ENCODE measurements at regions of chr4 and their contacts with region 1.

Region 1: DNA sequence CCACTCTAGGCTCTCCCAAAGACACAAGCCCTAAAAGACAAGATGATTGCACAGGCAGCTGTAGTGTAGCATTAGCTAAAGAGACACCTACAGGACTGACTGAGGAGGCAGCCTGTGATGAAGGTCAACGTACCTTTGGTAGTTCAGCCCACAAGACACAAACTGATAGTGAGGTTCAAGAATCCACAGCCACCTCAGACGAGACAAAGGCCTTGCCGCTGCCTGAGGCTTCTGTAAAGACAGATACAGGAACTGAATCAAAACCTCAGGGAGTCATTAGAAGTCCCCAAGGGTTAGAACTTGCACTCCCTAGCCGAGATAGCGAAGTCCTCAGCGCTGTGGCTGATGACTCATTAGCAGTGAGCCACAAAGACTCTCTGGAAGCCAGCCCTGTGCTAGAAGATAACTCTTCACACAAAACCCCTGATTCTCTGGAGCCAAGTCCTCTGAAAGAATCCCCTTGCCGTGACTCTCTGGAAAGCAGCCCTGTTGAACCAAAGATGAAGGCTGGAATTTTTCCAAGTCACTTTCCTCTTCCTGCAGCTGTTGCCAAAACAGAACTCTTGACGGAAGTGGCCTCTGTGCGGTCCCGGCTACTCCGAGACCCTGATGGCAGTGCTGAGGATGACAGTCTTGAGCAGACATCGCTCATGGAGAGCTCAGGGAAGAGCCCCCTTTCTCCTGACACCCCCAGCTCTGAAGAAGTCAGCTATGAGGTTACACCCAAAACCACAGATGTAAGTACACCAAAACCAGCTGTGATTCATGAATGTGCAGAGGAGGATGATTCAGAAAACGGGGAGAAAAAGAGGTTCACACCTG is 306.3 kb downstream of the ANK2 start:
- DNase-seq: peak; percentile 90
- H3K4me3 Mint-ChIP-seq: peak overlapping the region; percentile 54
- H3K27ac Mint-ChIP-seq: peak overlapping the region; percentile 89
- H3K4me1 Mint-ChIP-seq: peaks cover 20% of the 10 kb centered on the region
- H3K27me3 Mint-ChIP-seq: peaks cover 42% of the 10 kb centered on the region

Region 2: GRCh38 chr4:113278324-113278934 is 77.3 kb before region 1 on chr4:
- intact Hi-C with region 1: loop called (anchors 1 kb)
- DNase-seq: peak; percentile 85
- H3K4me3 Mint-ChIP-seq: no peak overlapping the region
- H3K27ac Mint-ChIP-seq: no peak overlapping the region
- H3K4me1 Mint-ChIP-seq: no peaks in the 10 kb centered on the region
- H3K27me3 Mint-ChIP-seq: peaks cover 22% of the 10 kb centered on the region

Region 3: GRCh38 chr4:113316879-113317278 is 38.9 kb before region 1 on chr4:
- intact Hi-C with region 1: loop called (anchors 5 kb)
- DNase-seq: peak; percentile 77
- H3K4me3 Mint-ChIP-seq: no peak overlapping the region
- H3K27ac Mint-ChIP-seq: no peak overlapping the region
- H3K4me1 Mint-ChIP-seq: peaks cover 10% of the 10 kb centered on the region
- H3K27me3 Mint-ChIP-seq: peaks cover 11% of the 10 kb centered on the region

Region 4: DNA sequence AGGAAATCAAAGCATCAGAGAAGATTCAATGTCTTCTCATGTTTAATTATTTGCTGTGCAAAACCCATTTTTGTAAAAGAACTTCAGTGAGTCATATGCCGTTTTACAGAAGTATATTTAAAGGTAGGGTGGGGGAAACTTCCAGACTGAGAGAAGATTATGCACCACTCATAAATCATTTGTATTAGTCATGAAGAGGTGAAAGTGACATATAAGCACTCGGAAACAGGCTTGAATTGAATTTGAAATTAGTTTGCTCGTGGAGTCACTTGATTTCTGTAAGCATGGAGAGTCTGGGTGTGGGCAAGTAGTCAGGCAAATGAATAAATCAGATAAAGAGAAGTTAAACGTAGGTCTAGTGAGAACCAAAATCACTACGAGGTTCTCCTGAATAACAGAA is 28.8 kb after region 1 on chr4:
- intact Hi-C with region 1: loop called (anchors 1 kb)
- DNase-seq: no peak
- H3K4me3 Mint-ChIP-seq: no peak overlapping the region
- H3K27ac Mint-ChIP-seq: no peak overlapping the region
- H3K4me1 Mint-ChIP-seq: peaks cover 9% of the 10 kb centered on the region
- H3K27me3 Mint-ChIP-seq: peaks cover 13% of the 10 kb centered on the region

Region 5: DNA sequence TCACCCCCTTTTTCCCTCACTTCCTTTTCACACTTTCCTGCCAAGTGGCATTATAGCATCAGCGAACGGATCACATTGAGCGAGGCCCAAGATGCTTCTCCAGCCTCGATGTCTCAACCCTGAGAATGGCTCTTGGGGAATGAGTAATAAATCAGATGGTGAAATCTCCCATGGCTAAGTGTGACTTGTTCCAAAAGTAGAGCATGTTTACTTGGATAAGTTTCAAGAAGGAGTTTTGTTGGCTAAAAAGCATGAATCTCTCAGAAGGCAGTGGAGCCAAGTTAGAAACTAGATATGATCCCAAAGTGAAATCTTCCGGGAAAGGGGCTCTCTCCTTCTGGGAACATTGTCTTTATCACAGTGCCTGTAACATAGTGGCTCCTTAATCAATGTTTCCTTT is 89.5 kb after region 1 on chr4:
- intact Hi-C with region 1: loop called (anchors 5 kb)
- DNase-seq: no peak
- H3K4me3 Mint-ChIP-seq: no peak overlapping the region
- H3K27ac Mint-ChIP-seq: peak overlapping the region; percentile 66
- H3K4me1 Mint-ChIP-seq: peaks cover 28% of the 10 kb centered on the region
- H3K27me3 Mint-ChIP-seq: peaks cover 1% of the 10 kb centered on the region

Region 6: DNA sequence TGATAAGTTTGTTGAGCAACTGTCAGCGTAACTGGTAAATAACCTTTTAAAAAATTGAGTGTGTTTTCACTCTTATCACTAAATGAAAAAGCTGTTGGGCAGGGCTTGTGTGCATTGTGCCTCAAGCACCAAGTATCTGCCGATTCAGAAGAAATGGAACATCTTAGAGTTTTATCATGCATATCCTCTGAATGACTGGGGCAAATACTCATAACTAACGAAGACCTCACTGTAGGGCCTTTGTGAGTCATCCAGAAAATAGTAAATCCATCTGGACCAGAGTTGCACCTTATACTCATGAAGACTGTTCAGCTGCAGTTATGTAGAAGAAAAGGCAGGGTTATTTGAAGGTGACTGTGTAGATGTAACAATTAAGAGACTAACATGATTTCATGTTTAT is 183.6 kb after region 1 on chr4:
- intact Hi-C with region 1: loop called (anchors 1 kb)
- DNase-seq: no peak
- H3K4me3 Mint-ChIP-seq: peak overlapping the region; percentile 9
- H3K27ac Mint-ChIP-seq: peak overlapping the region; percentile 79
- H3K4me1 Mint-ChIP-seq: peaks cover 30% of the 10 kb centered on the region
- H3K27me3 Mint-ChIP-seq: no peaks in the 10 kb centered on the region

Region 7: GRCh38 chr4:113564493-113564892 is 208.7 kb after region 1 on chr4:
- intact Hi-C with region 1: no loop called
- DNase-seq: no peak
- H3K4me3 Mint-ChIP-seq: peak overlapping the region; percentile 64
- H3K27ac Mint-ChIP-seq: no peak overlapping the region
- H3K4me1 Mint-ChIP-seq: peaks cover 40% of the 10 kb centered on the region
- H3K27me3 Mint-ChIP-seq: no peaks in the 10 kb centered on the region

Region 8: DNA sequence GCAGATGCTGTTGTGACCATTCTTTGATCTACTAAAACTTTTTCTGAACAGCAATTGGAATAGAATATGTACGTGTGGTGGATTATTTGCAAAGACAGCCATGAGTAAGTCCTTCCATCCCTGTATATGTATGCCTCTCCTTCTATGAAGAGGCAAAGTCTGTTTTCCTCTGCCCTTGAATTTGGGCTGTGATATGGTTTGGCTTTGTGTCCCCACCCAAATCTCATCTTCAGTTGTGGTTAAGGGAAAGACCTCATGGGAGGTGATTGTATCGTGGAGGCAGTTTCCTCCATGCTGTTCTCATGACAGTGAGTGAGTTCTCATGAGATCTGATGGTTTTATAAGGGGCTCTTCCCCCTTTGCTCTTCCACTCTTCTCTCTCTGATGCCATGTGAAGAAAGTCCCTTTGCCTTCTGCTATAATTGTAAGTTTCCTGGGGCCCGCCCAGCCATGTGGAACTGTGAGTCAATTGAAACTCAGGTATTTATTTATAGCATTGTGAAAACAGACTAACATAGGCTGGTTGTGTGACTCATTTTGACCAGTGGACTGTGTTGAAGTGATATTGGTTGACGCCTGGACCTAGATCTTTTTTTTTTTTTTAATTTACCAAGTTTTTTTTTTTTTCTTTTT is 514.1 kb after region 1 on chr4:
- intact Hi-C with region 1: loop called (anchors 1 kb)
- DNase-seq: peak; percentile 67
- H3K4me3 Mint-ChIP-seq: no peak overlapping the region
- H3K27ac Mint-ChIP-seq: peak overlapping the region; percentile 90
- H3K4me1 Mint-ChIP-seq: peaks cover 12% of the 10 kb centered on the region
- H3K27me3 Mint-ChIP-seq: no peaks in the 10 kb centered on the region